CD4-positive, alpha-beta T cell (primary cell): ENCODE measurements at regions of chr20 and their contacts with region 1.

Region 1: GRCh38 chr20:3173610-3174441 is 477 bp upstream of the LZTS3 start:
- DNase-seq: peak; percentile 83 to 95 (median 92)
- ATAC-seq: peak; percentile 11
- H3K4me3 ChIP-seq: peak overlapping the region; percentile 87
- H3K4me3 Mint-ChIP-seq: peak overlapping the region; percentile 87
- H3K27ac ChIP-seq: no peak overlapping the region
- H3K27ac Mint-ChIP-seq: peak overlapping the region; percentile 85
- H3K4me1 ChIP-seq: peaks cover 22% of the 10 kb centered on the region
- H3K4me1 Mint-ChIP-seq: peaks cover 20% of the 10 kb centered on the region
- H3K27me3 ChIP-seq: peaks cover 9 to 11% of the 10 kb centered on the region in 2 experiments
- H3K27me3 Mint-ChIP-seq: peaks cover 31% of the 10 kb centered on the region
- CTCF ChIP-seq: no peak

Region 2: DNA sequence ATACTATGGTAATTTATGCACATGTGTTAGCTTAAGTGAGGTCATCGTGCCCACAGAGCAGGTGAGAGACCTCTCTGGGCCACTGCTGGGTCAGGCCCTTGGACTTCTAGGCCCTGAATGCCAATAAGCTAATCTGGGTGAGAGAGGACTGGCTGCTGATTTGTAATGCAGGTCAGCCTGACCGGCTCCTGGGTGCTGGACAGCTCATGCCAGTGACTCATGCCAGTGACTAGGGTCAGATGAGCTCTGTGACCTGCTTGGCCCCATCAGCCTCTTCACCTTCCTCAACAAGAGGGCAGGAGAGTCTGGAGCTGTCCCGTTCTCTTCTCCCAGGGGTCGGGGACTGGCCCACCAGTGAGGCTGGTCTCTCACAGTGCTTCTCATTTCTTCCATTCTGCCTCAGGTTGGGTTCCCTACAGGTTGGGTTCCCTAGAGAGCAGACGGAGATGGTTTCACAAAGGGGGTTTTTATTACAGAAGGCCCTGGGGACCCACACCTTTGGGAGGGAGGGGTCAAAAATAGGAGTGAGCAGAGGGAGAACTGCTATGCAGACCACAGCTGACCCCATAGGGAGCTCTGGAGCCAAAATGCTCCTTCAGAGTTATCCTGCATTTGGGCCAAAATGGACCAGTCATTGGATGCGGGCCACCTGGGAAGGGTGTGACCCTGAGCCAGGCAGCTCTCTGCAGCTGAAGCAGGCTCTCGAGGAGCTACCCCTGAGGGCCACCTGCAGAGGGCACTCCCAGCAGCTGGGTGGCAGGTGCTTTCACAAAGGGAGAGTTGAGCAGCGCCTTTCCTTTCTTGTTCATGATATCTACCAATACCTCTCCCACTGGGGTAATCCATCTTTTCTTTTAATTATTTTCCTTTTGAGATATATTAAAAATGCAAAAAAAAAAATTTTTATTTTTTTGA is 104.6 kb before region 1 on chr20:
- CTCF ChIA-PET with region 1: no interaction called
- POLR2A ChIA-PET with region 1: interaction called, 3 read pairs
- intact Hi-C with region 1: loop called in 1 of 2 experiments (anchors 5 kb)
- DNase-seq: peak in 11 of 14 experiments; percentile 35 to 70 (median 55)
- ATAC-seq: peak; percentile 59
- H3K4me3 ChIP-seq: no peak overlapping the region
- H3K4me3 Mint-ChIP-seq: peak overlapping the region; percentile 45
- H3K27ac ChIP-seq: no peak overlapping the region
- H3K27ac Mint-ChIP-seq: no peak overlapping the region
- H3K4me1 ChIP-seq: peaks cover 24% of the 10 kb centered on the region
- H3K4me1 Mint-ChIP-seq: peaks cover 36% of the 10 kb centered on the region
- H3K27me3 ChIP-seq: no peaks in the 10 kb centered on the region
- H3K27me3 Mint-ChIP-seq: no peaks in the 10 kb centered on the region
- CTCF ChIP-seq: peak; percentile 28

Region 3: DNA sequence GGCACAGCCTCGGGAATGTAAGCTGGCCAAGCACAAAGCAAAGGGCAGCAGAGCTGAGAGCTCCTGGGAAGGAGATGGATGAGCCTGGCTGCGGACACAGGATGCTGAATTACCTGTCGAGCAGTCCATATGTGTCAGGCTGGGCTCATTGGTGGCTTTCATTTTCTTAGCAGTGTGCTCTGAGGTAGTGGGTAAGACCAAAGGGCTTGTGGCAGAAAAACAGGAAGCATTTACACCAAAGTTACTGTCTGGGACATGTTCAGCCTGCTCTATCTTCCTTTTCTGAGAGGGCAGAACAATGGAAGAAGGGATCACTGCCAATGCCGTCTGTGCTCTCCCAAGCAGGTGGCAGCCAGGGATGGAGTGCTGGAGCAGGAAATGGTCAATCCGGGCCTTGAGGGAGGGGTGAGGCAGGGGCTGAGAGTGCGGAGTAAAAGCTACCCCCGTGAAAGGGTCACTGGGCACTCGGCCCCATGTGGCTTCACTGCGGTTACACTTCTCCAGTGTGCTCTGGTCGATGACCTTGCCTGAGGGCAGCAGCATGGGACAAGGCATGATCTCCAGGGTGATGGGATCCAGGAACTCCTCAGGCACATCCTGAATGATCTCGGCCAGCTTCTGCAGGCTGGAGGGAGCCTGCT is 52.4 kb before region 1 on chr20:
- CTCF ChIA-PET with region 1: no interaction called
- POLR2A ChIA-PET with region 1: no interaction called
- intact Hi-C with region 1: loop called (anchors 2 to 5 kb)
- DNase-seq: peak in 13 of 14 experiments; percentile 18 to 74 (median 36)
- ATAC-seq: peak; percentile 72
- H3K4me3 ChIP-seq: peak overlapping the region; percentile 2
- H3K4me3 Mint-ChIP-seq: peak overlapping the region; percentile 83
- H3K27ac ChIP-seq: peak overlapping the region; percentile 68 to 70
- H3K27ac Mint-ChIP-seq: peak overlapping the region; percentile 99
- H3K4me1 ChIP-seq: peaks cover 42% of the 10 kb centered on the region
- H3K4me1 Mint-ChIP-seq: peaks cover 50% of the 10 kb centered on the region
- H3K27me3 ChIP-seq: no peaks in the 10 kb centered on the region
- H3K27me3 Mint-ChIP-seq: no peaks in the 10 kb centered on the region
- CTCF ChIP-seq: no peak

Region 4: GRCh38 chr20:3162080-3162611 is 11.7 kb before region 1 on chr20:
- CTCF ChIA-PET with region 1: interaction called, 10 read pairs
- POLR2A ChIA-PET with region 1: interaction called, 16 read pairs
- intact Hi-C with region 1: loop called (anchors 1 to 2 kb)
- DNase-seq: no peak
- ATAC-seq: no peak
- H3K4me3 ChIP-seq: no peak overlapping the region
- H3K4me3 Mint-ChIP-seq: peak overlapping the region; percentile 85
- H3K27ac ChIP-seq: no peak overlapping the region
- H3K27ac Mint-ChIP-seq: peak overlapping the region; percentile 47
- H3K4me1 ChIP-seq: peaks cover 30% of the 10 kb centered on the region
- H3K4me1 Mint-ChIP-seq: peaks cover 34% of the 10 kb centered on the region
- H3K27me3 ChIP-seq: peaks cover 7 to 9% of the 10 kb centered on the region in 2 experiments
- H3K27me3 Mint-ChIP-seq: no peaks in the 10 kb centered on the region
- CTCF ChIP-seq: no peak

Region 5: GRCh38 chr20:3239026-3239866 is 65.4 kb after region 1 on chr20 and contains the start of gene SLC4A11:
- CTCF ChIA-PET with region 1: no interaction called
- POLR2A ChIA-PET with region 1: no interaction called
- intact Hi-C with region 1: loop called in 1 of 2 experiments (anchors 2 kb)
- DNase-seq: peak in 9 of 14 experiments; percentile 10 to 55 (median 41)
- ATAC-seq: peak; percentile 61
- H3K4me3 ChIP-seq: peak within 1 kb of the TSS; percentile 64
- H3K4me3 Mint-ChIP-seq: peak within 1 kb of the TSS; percentile 93
- H3K27ac ChIP-seq: no peak within 1 kb of the TSS
- H3K27ac Mint-ChIP-seq: no peak within 1 kb of the TSS
- H3K4me1 ChIP-seq: peaks cover 24% of the 10 kb centered on the region
- H3K4me1 Mint-ChIP-seq: peaks cover 6% of the 10 kb centered on the region
- H3K27me3 ChIP-seq: peaks cover 51 to 53% of the 10 kb centered on the region in 2 experiments
- H3K27me3 Mint-ChIP-seq: peaks cover 70% of the 10 kb centered on the region
- CTCF ChIP-seq: no peak
- total RNA-seq, gene SLC4A11: 0.08 to 0.60 TPM